MCF 10A (cell line): ENCODE measurements at regions of chr1 and their contacts with region 1.

Region 1: DNA sequence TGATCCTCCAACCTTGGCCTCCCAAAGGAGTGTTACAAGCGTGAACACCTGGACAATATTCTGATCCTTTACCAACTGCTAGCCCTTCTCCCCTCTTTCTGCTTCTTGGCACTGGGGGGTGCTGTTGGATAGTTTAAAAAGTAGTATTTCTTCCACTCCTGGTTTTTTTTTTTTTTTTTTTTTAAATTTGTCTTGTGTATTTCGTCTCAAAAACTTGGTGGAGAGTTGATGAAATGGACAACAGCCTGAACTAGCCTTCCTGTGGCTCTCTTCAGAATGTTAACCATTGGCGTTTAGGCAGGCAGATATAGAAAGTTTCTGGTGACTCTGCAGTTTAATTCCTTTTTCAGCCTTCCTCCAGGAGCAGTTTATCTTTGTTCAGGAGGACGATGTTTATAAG is 69.7 kb upstream of the USP24 start:
- DNase-seq: peak; percentile 67
- H3K4me3 Mint-ChIP-seq: no peak overlapping the region
- H3K27ac Mint-ChIP-seq: no peak overlapping the region
- H3K4me1 Mint-ChIP-seq: peaks cover 5% of the 10 kb centered on the region
- H3K27me3 Mint-ChIP-seq: no peaks in the 10 kb centered on the region
- CTCF ChIP-seq: peak; percentile 57

Region 2: GRCh38 chr1:54919367-54920359 is 365.2 kb before region 1 on chr1:
- CTCF ChIA-PET with region 1: no interaction called
- POLR2A ChIA-PET with region 1: no interaction called
- intact Hi-C with region 1: no loop called
- DNase-seq: no peak
- H3K4me3 Mint-ChIP-seq: no peak overlapping the region
- H3K27ac Mint-ChIP-seq: no peak overlapping the region
- H3K4me1 Mint-ChIP-seq: peaks cover 7% of the 10 kb centered on the region
- H3K27me3 Mint-ChIP-seq: peaks cover 22% of the 10 kb centered on the region
- CTCF ChIP-seq: no peak

Region 3: DNA sequence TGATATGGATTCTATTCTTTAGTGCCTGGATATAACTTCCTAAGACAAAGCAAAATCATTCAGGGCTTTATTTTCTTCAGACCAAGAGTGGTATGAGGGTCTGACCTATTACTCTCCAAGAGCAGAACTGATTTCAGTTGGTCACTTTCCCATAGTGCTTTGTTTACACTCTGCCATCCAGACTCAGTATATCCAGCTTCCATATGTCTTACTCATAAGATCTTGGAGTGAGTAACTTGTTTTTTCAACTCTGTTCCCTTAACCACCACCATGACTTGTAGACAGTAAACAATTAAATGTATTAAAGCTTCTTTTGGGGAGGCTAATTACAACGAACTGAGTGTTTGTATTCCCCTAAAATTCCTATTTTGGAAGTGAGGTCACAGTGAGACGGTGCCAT is 153.1 kb before region 1 on chr1:
- CTCF ChIA-PET with region 1: interaction called, 194 read pairs
- POLR2A ChIA-PET with region 1: no interaction called
- intact Hi-C with region 1: no loop called
- DNase-seq: peak; percentile 9
- H3K4me3 Mint-ChIP-seq: no peak overlapping the region
- H3K27ac Mint-ChIP-seq: no peak overlapping the region
- H3K4me1 Mint-ChIP-seq: no peaks in the 10 kb centered on the region
- H3K27me3 Mint-ChIP-seq: no peaks in the 10 kb centered on the region
- CTCF ChIP-seq: no peak

Region 4: DNA sequence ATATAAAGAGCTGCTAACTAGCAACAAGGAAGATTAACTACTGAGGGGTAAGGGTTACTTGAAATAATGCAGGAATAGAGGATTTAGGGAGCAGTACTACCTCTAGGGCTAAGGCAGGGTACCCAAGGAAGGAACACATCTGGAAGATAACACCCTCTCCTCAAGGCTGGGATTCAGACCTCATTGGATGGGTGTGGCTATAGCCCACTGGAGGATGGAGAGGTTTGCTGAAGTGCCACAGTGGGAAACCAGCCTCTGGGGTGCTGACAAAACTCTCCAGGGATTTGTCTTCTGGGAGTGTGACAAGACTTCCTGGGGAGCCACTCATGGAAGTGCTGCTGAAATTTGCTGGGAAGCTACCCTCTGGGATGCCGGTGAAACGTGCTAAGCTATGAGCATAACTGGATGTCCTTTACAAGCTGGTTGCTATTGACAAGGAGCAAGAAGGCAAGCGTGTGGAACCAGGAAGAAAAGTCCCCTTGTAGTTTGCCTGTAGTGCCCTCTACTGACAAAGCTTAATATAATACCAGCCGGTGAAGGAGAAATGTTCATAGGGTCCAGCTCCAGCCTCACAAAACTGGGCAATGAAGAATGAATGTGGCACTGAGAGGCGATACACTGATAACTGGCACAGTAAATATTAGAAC is 53.1 kb after region 1 on chr1:
- CTCF ChIA-PET with region 1: interaction called, 5 read pairs
- POLR2A ChIA-PET with region 1: no interaction called
- intact Hi-C with region 1: loop called (anchors 1 kb)
- DNase-seq: peak; percentile 74
- H3K4me3 Mint-ChIP-seq: no peak overlapping the region
- H3K27ac Mint-ChIP-seq: no peak overlapping the region
- H3K4me1 Mint-ChIP-seq: no peaks in the 10 kb centered on the region
- H3K27me3 Mint-ChIP-seq: no peaks in the 10 kb centered on the region
- CTCF ChIP-seq: peak; percentile 23

Region 5: DNA sequence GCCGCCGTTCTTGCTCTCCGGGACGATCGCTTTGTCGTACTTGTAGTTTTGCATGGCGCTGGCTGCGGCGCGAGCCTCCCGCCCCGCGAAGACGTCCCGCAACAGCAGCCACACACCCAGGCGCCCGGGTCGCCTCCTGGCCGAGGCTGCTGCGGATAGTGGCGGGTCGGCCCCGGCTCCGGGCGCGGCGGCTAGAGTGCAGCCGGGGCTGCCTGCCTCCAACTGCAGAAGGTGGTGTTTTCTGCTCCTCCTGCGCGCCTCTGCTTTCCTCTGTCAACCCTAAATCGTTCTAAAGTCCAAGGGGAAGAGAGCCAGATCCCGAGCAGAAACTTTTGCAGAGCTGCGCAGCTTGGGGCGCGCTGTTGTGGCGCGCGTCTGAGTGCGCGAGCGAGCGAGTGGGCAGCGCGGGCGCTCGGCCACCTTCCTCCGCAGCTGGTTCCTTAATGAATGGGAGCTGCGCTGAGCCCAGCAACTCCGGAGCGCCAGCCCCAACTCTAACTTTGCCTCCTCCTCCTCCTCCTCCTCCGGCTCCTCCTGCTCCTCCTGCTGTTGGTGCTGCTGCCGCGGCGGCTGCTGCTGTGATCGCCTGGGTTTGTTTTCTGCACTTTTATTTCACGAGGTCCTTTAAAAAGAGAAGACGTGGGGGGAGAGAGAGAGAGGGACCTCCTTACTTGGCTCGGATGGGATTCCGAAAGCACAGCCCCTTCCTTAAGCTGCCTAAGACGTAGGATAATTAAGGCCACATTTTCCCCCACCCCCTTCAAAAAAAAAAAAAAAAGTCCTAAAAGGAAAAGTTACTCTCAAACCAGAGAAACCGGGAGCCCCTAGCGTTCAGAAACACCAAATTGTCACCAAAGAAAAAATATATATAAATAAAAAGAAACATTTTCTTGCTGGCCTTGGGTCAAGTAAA is 1294.4 kb after region 1 on chr1 and contains the start of gene PLPP3:
- CTCF ChIA-PET with region 1: interaction called, 129 read pairs
- POLR2A ChIA-PET with region 1: interaction called, 5 read pairs
- intact Hi-C with region 1: loop called (anchors 1 kb)
- DNase-seq: peak; percentile 85
- H3K4me3 Mint-ChIP-seq: peak within 1 kb of the TSS; percentile 97
- H3K27ac Mint-ChIP-seq: peak within 1 kb of the TSS; percentile 33
- H3K4me1 Mint-ChIP-seq: no peaks in the 10 kb centered on the region
- H3K27me3 Mint-ChIP-seq: no peaks in the 10 kb centered on the region
- CTCF ChIP-seq: no peak
- total RNA-seq, gene PLPP3: 0.84 and 1.3 TPM in 2 replicates

Region 6: DNA sequence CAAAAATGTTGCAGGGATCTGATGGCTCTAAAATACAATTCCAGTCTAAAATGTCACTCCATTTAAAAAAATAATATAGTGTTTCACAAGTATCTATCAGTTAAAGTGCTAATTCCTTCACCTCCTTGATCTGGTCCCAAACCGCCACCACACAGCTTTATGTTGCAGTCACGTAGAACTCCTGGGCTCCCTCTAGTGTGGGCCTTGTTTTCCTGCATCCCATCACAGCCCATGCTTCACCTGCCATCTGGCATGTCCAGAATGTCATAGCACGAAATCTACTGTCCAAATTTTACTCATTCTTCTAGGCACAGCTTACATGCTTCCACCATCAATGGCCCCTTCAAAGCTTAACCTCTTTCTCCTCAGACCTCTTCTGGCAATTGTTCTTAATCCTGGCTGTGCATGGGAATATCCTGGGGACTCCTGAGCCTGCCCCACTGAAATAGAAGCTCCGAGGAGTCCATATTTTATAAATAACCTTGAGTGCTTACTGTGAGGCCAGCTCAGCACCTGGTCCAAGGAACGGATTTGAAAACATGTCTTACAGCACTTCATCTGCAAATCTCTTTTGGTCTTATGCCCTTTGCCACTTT is 1518.8 kb after region 1 on chr1:
- CTCF ChIA-PET with region 1: interaction called, 5 read pairs
- POLR2A ChIA-PET with region 1: no interaction called
- intact Hi-C with region 1: loop called (anchors 1 kb)
- DNase-seq: peak; percentile 68
- H3K4me3 Mint-ChIP-seq: no peak overlapping the region
- H3K27ac Mint-ChIP-seq: no peak overlapping the region
- H3K4me1 Mint-ChIP-seq: no peaks in the 10 kb centered on the region
- H3K27me3 Mint-ChIP-seq: no peaks in the 10 kb centered on the region
- CTCF ChIP-seq: peak; percentile 63